Activated CD4-positive, alpha-beta T cell treated with anti-CD3 and anti-CD28 coated beads for 36 hours (primary cell): ENCODE measurements at regions of chrX and their contacts with region 1.

Region 1: DNA sequence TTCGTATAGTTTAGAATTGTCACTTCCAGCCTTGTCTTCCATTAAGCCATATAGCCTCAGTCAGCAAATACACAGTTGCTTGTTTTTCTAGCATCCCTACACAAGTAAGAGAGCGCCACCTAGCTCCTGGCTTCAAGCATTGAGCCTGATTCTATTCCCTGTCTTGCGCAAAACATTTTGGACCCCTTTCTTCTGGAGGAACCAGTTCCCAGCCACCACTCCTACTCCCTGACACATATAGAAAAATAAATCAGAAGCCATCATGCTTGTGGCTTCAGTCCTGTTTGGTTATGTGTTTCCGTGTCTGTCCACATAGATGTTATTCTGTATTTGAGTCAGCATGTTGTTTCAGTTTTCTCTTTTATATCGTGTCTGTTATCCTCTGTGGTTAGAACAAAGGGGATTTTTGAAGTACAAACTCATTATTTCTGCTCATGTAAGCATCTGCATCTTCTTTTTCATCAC is 59.9 kb downstream of the GK start:
- DNase-seq: peak; percentile 71
- ATAC-seq: peak; percentile 90
- H3K4me3 Mint-ChIP-seq: peak overlapping the region; percentile 19
- H3K27ac Mint-ChIP-seq: peak overlapping the region; percentile 81
- H3K4me1 Mint-ChIP-seq: peaks cover 33% of the 10 kb centered on the region
- H3K27me3 Mint-ChIP-seq: no peaks in the 10 kb centered on the region

Region 2: DNA sequence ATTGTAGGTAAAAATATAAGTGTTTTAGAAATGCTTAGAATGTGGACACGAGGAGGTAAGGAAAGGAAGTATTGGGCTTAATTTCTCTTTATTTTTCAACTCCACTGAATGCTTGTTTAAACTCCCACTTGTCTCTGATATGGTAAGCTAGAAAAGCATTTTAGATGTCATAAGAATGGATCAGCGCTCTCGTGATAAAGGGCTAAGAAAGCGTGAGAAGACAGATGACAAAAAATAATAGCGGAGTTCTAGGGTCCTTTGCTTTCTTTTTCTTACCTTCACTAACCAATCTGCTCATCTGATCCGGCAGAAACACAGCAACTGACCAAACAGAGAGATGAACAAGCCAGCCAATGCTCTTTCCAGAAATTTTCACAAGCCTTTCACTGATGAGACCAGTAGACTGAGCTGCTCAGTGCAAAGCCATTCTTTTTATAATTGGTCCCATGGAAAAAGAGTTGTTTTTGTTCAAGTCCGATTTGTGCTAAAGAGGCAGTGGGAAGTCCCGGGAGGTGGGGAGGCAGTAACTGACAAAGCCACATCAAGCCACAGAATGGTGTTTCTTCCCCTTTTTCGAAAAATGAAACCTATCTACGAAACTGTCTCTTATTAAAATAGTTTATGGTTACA is 135.6 kb before region 1 on chrX and contains the start of gene TASL:
- CTCF ChIA-PET with region 1: no interaction called
- POLR2A ChIA-PET with region 1: no interaction called
- intact Hi-C with region 1: loop called (anchors 2 kb)
- DNase-seq: peak; percentile 39
- ATAC-seq: peak; percentile 89
- H3K4me3 Mint-ChIP-seq: peak within 1 kb of the TSS; percentile 80
- H3K27ac Mint-ChIP-seq: peak within 1 kb of the TSS; percentile 83
- H3K4me1 Mint-ChIP-seq: peaks cover 15% of the 10 kb centered on the region
- H3K27me3 Mint-ChIP-seq: no peaks in the 10 kb centered on the region
- total RNA-seq, gene TASL: 1.7 to 2.2 TPM

Region 3: GRCh38 chrX:30635630-30636029 is 77.5 kb before region 1 on chrX:
- CTCF ChIA-PET with region 1: interaction called, 5 read pairs
- POLR2A ChIA-PET with region 1: no interaction called
- intact Hi-C with region 1: loop called in 1 of 2 experiments (anchors 5 kb)
- DNase-seq: no peak
- ATAC-seq: peak; percentile 39
- H3K4me3 Mint-ChIP-seq: no peak overlapping the region
- H3K27ac Mint-ChIP-seq: no peak overlapping the region
- H3K4me1 Mint-ChIP-seq: peaks cover 3% of the 10 kb centered on the region
- H3K27me3 Mint-ChIP-seq: no peaks in the 10 kb centered on the region

Region 4: GRCh38 chrX:30659421-30659820 is 53.7 kb before region 1 on chrX:
- CTCF ChIA-PET with region 1: no interaction called
- POLR2A ChIA-PET with region 1: no interaction called
- intact Hi-C with region 1: loop called (anchors 1 to 2 kb)
- DNase-seq: no peak
- ATAC-seq: peak; percentile 77
- H3K4me3 Mint-ChIP-seq: peak overlapping the region; percentile 28
- H3K27ac Mint-ChIP-seq: peak overlapping the region; percentile 96
- H3K4me1 Mint-ChIP-seq: peaks cover 42% of the 10 kb centered on the region
- H3K27me3 Mint-ChIP-seq: no peaks in the 10 kb centered on the region

Region 5: GRCh38 chrX:30831082-30831481 is 118.0 kb after region 1 on chrX:
- CTCF ChIA-PET with region 1: no interaction called
- POLR2A ChIA-PET with region 1: no interaction called
- intact Hi-C with region 1: loop called in 1 of 2 experiments (anchors 2 kb)
- DNase-seq: peak; percentile 55
- ATAC-seq: peak; percentile 91
- H3K4me3 Mint-ChIP-seq: peak overlapping the region; percentile 34
- H3K27ac Mint-ChIP-seq: no peak overlapping the region
- H3K4me1 Mint-ChIP-seq: peaks cover 37% of the 10 kb centered on the region
- H3K27me3 Mint-ChIP-seq: no peaks in the 10 kb centered on the region

Region 6: GRCh38 chrX:32495855-32496254 is 1782.8 kb after region 1 on chrX:
- CTCF ChIA-PET with region 1: no interaction called
- POLR2A ChIA-PET with region 1: no interaction called
- intact Hi-C with region 1: no loop called
- DNase-seq: no peak
- ATAC-seq: no peak
- H3K4me3 Mint-ChIP-seq: no peak overlapping the region
- H3K27ac Mint-ChIP-seq: no peak overlapping the region
- H3K4me1 Mint-ChIP-seq: no peaks in the 10 kb centered on the region
- H3K27me3 Mint-ChIP-seq: no peaks in the 10 kb centered on the region